AG04450 (cell line): ENCODE measurements at regions of chr4 and their contacts with region 1.

Region 1: DNA sequence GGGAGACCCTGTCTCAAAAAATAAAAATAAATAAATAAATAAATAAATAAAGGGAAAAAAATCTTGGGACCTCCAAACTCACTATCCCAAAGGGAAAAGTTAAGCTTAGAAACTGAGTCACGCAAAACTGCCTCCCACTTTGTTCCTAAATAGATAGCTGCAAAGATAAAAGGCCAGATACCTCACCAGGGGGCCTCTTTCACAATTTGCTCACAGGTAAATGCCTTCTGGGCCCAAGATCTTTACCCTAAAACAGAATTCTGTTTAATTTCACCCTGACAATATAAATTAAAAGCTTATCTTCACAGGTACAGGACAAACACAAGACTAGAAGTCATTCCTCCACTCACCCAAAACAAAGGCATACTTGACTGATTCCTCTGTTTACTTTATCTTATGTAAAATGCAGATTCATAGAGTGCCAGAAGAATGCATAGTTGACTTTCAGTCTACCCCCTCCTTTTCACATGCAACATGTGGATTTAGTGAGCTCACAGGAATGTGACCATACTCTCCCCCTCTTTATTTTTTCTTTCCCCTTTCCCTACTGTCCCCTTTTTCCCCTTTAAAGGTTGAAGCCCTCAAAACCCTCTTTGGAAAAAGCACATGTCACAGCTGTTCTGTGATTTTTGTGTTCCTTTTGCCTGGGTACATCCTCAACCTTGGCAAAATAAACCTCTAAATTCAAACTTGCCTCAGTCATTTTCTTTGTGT is 23.4 kb downstream of the ELF2 start:
- DNase-seq: no peak
- H3K4me3 ChIP-seq: no peak overlapping the region
- H3K27ac ChIP-seq: no peak overlapping the region
- H3K27me3 ChIP-seq: no peaks in the 10 kb centered on the region
- CTCF ChIP-seq: no peak

Region 2: GRCh38 chr4:139167774-139168444 is 14.3 kb after region 1 on chr4:
- CTCF ChIA-PET with region 1: interaction called, 28 read pairs
- POLR2A ChIA-PET with region 1: no interaction called
- DNase-seq: no peak
- H3K4me3 ChIP-seq: no peak overlapping the region
- H3K27ac ChIP-seq: no peak overlapping the region
- H3K27me3 ChIP-seq: no peaks in the 10 kb centered on the region
- CTCF ChIP-seq: peak; percentile 58

Region 3: GRCh38 chr4:139214039-139214534 is 60.5 kb after region 1 on chr4:
- CTCF ChIA-PET with region 1: no interaction called
- POLR2A ChIA-PET with region 1: no interaction called
- DNase-seq: no peak
- H3K4me3 ChIP-seq: no peak overlapping the region
- H3K27ac ChIP-seq: no peak overlapping the region
- H3K27me3 ChIP-seq: no peaks in the 10 kb centered on the region
- CTCF ChIP-seq: no peak